Cardiac septum (tissue), 1 donor: ENCODE measurements at regions of chr9 and their contacts with region 1.

Region 1: GRCh38 chr9:84953797-84954705 is 284.5 kb downstream of the NTRK2 start:
- DNase-seq: peak; percentile 86

Region 2: GRCh38 chr9:84697509-84698114 is 256.4 kb before region 1 on chr9:
- intact Hi-C with region 1: loop called (anchors 2 kb)
- DNase-seq: peak; percentile 78

Region 3: GRCh38 chr9:84781458-84781857 is 172.6 kb before region 1 on chr9:
- intact Hi-C with region 1: loop called (anchors 10 kb)
- DNase-seq: no peak